Naive thymus-derived CD4-positive, alpha-beta T cell (primary cell): ENCODE measurements at regions of chr16 and their contacts with region 1.

Region 1: GRCh38 chr16:21599233-21600030 is at the start of gene METTL9:
- DNase-seq: peak; percentile 92 to 96 (median 94)
- ATAC-seq: peak; percentile 96
- H3K4me3 ChIP-seq: peak within 1 kb of the TSS; percentile 82
- H3K4me3 Mint-ChIP-seq: peak within 1 kb of the TSS; percentile 91 to 98 (median 94)
- H3K27ac ChIP-seq: peak within 1 kb of the TSS; percentile 91
- H3K27ac Mint-ChIP-seq: peak within 1 kb of the TSS; percentile 86 to 99 (median 96)
- H3K4me1 ChIP-seq: peaks cover 21 to 32% of the 10 kb centered on the region in 2 donors
- H3K4me1 Mint-ChIP-seq: peaks cover 45 to 70% (median 54%) of the 10 kb centered on the region in 7 donors
- H3K27me3 ChIP-seq: no peaks in the 10 kb centered on the region
- H3K27me3 Mint-ChIP-seq: no peaks in the 10 kb centered on the region
- total RNA-seq, gene METTL9: 68.4 to 128 (median 80.1) TPM

Region 2: DNA sequence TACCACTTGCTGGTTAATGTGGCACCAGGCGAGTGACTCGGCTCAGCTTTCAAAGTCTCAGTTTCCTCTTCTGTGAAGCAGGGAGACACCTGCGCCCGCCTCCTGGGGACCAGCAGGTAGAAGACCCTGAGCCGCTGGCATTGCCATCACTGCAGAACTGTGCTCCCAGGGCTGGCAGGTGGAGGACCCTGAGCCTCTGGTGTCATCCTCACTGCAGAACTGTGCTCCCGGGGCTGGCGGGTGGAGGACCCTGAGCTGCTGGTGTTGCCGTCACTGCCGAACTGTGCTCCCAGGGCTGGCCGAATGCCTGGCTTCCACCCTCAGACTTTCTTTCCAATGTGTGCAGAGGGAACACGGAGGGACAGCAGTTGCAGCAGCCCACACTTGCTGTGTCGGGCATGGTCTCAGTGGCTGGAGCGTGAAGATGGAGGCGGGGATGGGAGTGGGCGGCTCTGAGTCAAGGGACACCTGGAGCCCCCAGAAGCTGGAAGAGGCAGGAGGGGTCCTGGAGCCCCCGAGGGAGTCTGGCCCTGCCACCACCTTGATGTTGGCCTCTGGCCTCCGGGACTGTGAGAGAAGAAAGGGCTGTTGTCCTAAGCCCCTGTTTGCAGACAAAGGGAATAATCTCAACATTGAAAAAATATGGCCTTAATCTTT is 75.9 kb before region 1 on chr16:
- CTCF ChIA-PET with region 1: no interaction called
- POLR2A ChIA-PET with region 1: interaction called, 8 read pairs
- intact Hi-C with region 1: loop called (anchors 1 kb)
- DNase-seq: no peak
- ATAC-seq: no peak
- H3K4me3 ChIP-seq: no peak overlapping the region
- H3K4me3 Mint-ChIP-seq: peak overlapping the region in 2 of 10 donors; percentile 29 to 56
- H3K27ac ChIP-seq: no peak overlapping the region
- H3K27ac Mint-ChIP-seq: no peak overlapping the region
- H3K4me1 ChIP-seq: no peaks in the 10 kb centered on the region
- H3K4me1 Mint-ChIP-seq: peaks cover 2 to 9% (median 6%) of the 10 kb centered on the region in 7 donors
- H3K27me3 ChIP-seq: no peaks in the 10 kb centered on the region
- H3K27me3 Mint-ChIP-seq: peaks cover 0 to 7% (median 0%) of the 10 kb centered on the region in 5 donors

Region 3: DNA sequence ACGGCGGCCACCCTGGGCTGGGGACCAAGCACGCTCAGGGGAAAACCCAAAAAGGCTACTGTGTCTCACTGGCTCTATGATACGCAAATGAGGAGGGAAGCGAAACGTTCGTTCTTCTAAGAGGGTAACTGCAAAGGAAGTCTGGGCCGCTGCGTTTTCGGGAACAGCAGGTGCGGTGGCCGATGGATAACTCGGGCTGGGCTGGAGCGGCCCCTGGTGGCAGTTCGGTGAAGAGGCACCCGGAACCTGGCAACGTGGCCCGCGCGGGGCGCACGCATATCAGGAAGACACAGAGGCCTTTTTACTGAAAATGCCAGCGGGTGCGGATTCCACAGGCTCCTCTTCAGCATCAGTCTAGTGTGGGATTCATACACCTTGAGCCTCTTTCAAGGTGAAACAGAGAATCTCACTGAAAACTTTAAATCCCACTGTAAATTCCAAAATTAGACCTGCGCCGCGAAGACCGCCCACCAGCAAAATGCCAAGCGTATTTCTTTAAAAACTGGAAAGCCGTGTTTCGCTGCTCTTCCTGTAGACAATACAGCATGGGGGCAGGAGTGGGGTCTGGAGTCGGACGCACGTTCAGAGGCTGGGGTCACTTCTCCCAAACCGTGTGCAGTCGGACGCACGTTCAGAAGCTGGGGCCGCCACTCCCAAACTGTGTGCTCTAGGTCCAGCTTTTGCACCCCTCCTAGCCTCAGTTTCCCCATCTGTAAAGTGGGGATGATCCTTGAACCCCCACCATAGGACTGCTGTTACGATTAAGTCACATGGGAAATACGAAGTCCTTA is 44.4 kb before region 1 on chr16:
- CTCF ChIA-PET with region 1: no interaction called
- POLR2A ChIA-PET with region 1: no interaction called
- intact Hi-C with region 1: no loop called
- DNase-seq: peak; percentile 77 to 94 (median 90)
- ATAC-seq: peak; percentile 97
- H3K4me3 ChIP-seq: peak overlapping the region; percentile 36
- H3K4me3 Mint-ChIP-seq: peak overlapping the region; percentile 34 to 76 (median 64)
- H3K27ac ChIP-seq: no peak overlapping the region
- H3K27ac Mint-ChIP-seq: peak overlapping the region in 5 of 9 donors; percentile 20 to 58 (median 50)
- H3K4me1 ChIP-seq: peaks cover 6 to 7% of the 10 kb centered on the region in 2 donors
- H3K4me1 Mint-ChIP-seq: peaks cover 0 to 14% (median 9%) of the 10 kb centered on the region in 7 donors
- H3K27me3 ChIP-seq: no peaks in the 10 kb centered on the region
- H3K27me3 Mint-ChIP-seq: peaks cover 0 to 5% (median 5%) of the 10 kb centered on the region in 5 donors

Region 4: DNA sequence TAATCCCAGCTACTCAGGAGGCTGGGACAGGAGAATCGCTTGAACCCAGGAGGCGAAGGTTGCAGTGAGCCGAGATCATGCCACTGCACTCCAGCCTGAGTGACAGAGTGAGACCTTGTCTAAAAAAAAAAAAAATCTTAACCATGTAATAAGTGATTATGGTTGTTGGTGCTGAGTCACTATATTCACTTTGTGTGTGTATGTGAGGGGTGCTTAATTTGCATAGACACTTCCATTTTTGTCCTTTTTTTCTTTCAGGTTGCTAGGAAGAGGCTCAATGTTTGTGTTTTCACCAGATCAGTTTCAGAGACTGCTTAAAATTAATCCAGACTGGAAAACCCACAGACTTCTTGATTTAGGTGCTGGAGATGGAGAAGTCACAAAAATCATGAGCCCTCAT is 18.2 kb after region 1 on chr16:
- CTCF ChIA-PET with region 1: no interaction called
- POLR2A ChIA-PET with region 1: interaction called, 6 read pairs
- intact Hi-C with region 1: loop called in 1 of 2 experiments (anchors 2 kb)
- DNase-seq: no peak
- ATAC-seq: no peak
- H3K4me3 ChIP-seq: no peak overlapping the region
- H3K4me3 Mint-ChIP-seq: no peak overlapping the region
- H3K27ac ChIP-seq: no peak overlapping the region
- H3K27ac Mint-ChIP-seq: peak overlapping the region in 1 of 9 donors; percentile 10
- H3K4me1 ChIP-seq: peaks cover 7 to 17% of the 10 kb centered on the region in 2 donors
- H3K4me1 Mint-ChIP-seq: peaks cover 29 to 72% (median 62%) of the 10 kb centered on the region in 7 donors
- H3K27me3 ChIP-seq: no peaks in the 10 kb centered on the region
- H3K27me3 Mint-ChIP-seq: no peaks in the 10 kb centered on the region